Activated CD4-positive, alpha-beta T cell treated with anti-CD3 and anti-CD28 coated beads, Interleukin-2, amount 10 ng/mL, durations not matched to agents 24 days and 14 days (primary cell): ENCODE measurements at regions of chr11 and their contacts with region 1.

Region 1: GRCh38 chr11:117232092-117232878 is at the start of gene RNF214:
- DNase-seq: peak; percentile 93
- H3K4me3 Mint-ChIP-seq: peak within 1 kb of the TSS; percentile 93
- H3K27ac Mint-ChIP-seq: peak within 1 kb of the TSS; percentile 100
- H3K4me1 Mint-ChIP-seq: peaks cover 38% of the 10 kb centered on the region
- H3K27me3 Mint-ChIP-seq: no peaks in the 10 kb centered on the region
- total RNA-seq, gene RNF214: 22.0 and 23.2 TPM in 2 replicates

Region 2: DNA sequence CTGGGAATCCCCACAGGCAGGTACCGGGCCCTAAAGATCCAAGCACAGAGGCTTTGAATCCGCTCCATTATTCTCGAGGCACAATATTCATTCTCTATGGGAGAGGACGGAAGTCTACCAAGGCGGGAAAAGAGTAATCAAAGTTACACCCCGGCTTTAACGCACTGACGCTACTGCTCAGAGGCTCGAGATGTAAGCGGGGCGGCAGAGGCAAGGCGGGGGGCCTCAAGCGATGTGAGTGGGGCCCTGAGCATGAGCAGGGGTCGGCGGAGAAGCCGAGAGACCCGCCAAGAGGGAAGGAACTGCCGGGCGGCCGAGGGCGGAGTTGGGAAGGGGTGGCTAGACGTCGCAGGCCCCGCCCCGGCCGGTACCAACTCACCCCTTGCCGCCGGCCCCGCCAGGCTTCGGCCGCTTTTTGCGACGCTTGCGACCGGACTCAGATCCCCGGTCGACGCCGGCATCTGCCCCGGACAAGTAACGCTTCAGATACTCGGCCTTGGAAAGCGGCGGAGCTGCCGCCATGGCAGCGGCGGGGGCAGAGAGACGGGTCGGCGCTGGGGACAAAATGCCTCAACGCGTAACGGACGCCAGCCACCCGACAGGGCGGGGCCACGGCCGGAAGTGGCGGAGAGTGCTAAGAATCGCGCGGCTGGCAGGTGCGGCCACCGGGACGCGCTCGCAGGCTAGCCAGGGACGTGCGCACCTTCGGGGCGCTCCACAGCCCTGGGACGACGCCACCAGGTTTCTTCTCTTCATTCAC is 459.7 kb before region 1 on chr11 and contains the start of gene BUD13:
- intact Hi-C with region 1: loop called (anchors 1 kb)
- DNase-seq: peak; percentile 99
- H3K4me3 Mint-ChIP-seq: peak within 1 kb of the TSS; percentile 91
- H3K27ac Mint-ChIP-seq: peak within 1 kb of the TSS; percentile 95
- H3K4me1 Mint-ChIP-seq: peaks cover 46% of the 10 kb centered on the region
- H3K27me3 Mint-ChIP-seq: no peaks in the 10 kb centered on the region
- total RNA-seq, gene BUD13: 31.5 and 33.2 TPM in 2 replicates

Region 3: GRCh38 chr11:116787786-116788486 is 444.3 kb before region 1 on chr11 and contains the start of gene ZPR1:
- intact Hi-C with region 1: loop called (anchors 5 kb)
- DNase-seq: peak; percentile 97
- H3K4me3 Mint-ChIP-seq: peak within 1 kb of the TSS; percentile 97
- H3K27ac Mint-ChIP-seq: peak within 1 kb of the TSS; percentile 87
- H3K4me1 Mint-ChIP-seq: peaks cover 44% of the 10 kb centered on the region
- H3K27me3 Mint-ChIP-seq: peaks cover 2% of the 10 kb centered on the region
- total RNA-seq, gene ZPR1: 105 and 106 TPM in 2 replicates

Region 4: DNA sequence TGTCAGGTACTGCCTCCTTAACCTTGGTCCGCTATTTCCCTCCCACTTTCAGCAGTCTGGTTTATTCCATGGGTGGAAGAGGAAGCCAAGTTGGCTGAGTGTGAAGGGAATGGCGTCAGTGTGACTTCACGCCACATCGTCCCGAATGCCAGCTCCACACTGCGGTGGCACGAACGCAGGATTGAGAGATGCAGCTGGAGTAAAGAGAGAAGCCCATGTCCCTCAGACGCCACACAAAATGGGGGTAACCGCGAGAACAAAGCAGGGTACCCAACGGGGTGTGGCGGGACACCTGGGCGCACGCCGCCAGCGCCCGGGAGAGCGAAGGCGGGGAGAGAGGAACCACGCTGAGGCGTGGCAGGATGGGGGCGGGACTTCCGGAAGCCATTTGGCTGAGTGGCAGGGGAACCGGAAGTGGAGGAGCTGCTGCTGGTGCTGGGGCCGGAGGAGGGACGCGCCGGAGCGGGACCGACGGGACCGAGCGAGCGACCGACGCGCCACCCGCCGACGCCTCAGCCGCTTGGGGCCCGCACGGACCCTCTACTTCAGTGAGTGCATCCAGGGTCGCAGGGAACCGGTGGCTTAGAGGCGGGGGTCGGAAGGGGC is 88.3 kb before region 1 on chr11 and contains the start of gene PAFAH1B2:
- intact Hi-C with region 1: loop called (anchors 1 kb)
- DNase-seq: peak; percentile 99
- H3K4me3 Mint-ChIP-seq: peak within 1 kb of the TSS; percentile 97
- H3K27ac Mint-ChIP-seq: peak within 1 kb of the TSS; percentile 93
- H3K4me1 Mint-ChIP-seq: peaks cover 31% of the 10 kb centered on the region
- H3K27me3 Mint-ChIP-seq: peaks cover 24% of the 10 kb centered on the region
- total RNA-seq, gene PAFAH1B2: 79.8 and 81.0 TPM in 2 replicates

Region 5: GRCh38 chr11:117178210-117179034 is 53.9 kb before region 1 on chr11 and contains the start of gene SIDT2:
- intact Hi-C with region 1: loop called (anchors 1 kb)
- DNase-seq: peak; percentile 97
- H3K4me3 Mint-ChIP-seq: peak within 1 kb of the TSS; percentile 88
- H3K27ac Mint-ChIP-seq: peak within 1 kb of the TSS; percentile 86
- H3K4me1 Mint-ChIP-seq: peaks cover 26% of the 10 kb centered on the region
- H3K27me3 Mint-ChIP-seq: no peaks in the 10 kb centered on the region
- total RNA-seq, gene SIDT2: 23.9 and 29.1 TPM in 2 replicates

Region 6: GRCh38 chr11:117327567-117328374 is 95.5 kb after region 1 on chr11 and contains the start of gene CEP164:
- intact Hi-C with region 1: loop called (anchors 1 kb)
- DNase-seq: peak; percentile 98
- H3K4me3 Mint-ChIP-seq: peak within 1 kb of the TSS; percentile 62
- H3K27ac Mint-ChIP-seq: peak within 1 kb of the TSS; percentile 68
- H3K4me1 Mint-ChIP-seq: peaks cover 15% of the 10 kb centered on the region
- H3K27me3 Mint-ChIP-seq: peaks cover 9% of the 10 kb centered on the region
- total RNA-seq, gene CEP164: 39.0 and 40.1 TPM in 2 replicates